Cardiac septum (tissue), 1 donor: ENCODE measurements at regions of chr17 and their contacts with region 1.

Region 1: DNA sequence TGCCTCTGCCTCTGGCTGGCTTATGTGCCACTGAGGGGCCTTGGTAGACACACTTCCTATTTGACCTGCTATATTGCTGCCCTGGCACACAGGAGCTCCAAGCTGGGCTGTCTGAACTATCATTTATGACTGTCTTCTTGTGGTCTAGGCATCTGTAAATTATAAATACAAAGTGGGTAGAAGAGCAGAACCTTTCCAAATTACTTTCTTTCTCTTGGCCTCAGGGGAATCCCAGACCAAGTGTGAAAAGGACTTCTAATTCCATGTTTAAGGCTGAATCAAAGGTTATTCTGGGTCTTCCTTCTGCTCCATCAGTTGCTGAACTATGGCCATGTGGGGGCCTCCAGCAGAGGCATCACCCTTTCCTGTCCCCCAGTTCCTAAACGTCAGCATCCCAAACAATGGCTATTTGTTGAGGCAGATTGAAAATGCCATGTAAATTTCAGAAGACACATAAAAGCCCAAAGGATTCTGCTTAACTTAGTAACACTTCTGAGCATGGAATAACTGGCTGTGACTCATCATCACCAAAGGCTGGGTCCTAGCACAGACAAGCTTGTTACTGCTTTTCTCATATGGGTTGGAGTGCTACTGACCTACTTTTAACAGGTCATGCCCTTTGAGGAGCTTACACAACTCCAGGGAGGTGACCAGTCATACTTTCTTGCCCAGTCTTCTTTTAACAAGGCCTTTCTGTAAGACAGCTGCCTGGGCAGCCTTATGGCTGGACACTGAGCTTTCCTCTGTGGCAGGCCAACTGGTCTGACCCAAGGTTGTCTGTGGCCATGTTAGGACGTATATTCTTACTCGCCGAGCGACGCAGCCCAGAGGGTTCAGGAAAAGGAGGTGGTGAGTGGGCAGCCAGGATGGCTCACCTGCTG is 154.8 kb downstream of the VPS53 start:
- DNase-seq: no peak

Region 2: GRCh38 chr17:520447-521182 is 39.2 kb before region 1 on chr17:
- intact Hi-C with region 1: loop called (anchors 5 kb)
- DNase-seq: no peak

Region 3: DNA sequence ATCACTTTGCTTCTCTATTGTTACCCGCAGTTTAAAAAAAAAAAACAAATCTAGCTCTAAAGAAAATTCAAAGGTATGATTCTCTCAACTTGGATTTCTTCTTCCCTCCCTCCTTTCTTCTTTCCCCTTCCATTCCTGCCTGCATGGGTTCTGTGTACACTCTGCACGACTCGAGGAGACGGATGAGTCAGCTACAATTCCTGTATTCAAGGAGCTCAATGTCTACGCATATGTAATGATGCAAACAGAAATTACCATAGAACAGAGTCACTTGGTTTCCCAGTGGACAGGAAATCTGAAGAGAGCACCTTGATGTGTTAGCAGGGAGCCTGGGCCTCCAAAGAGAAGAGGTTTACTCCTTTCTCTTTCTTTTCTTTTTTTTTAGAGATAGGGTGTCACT is 62.6 kb after region 1 on chr17:
- intact Hi-C with region 1: loop called (anchors 10 kb)
- DNase-seq: no peak

Region 4: GRCh38 chr17:700504-701094 is 140.8 kb after region 1 on chr17:
- intact Hi-C with region 1: loop called (anchors 5 kb)
- DNase-seq: no peak